Panc1 (cell line): ENCODE measurements at regions of chr17 and their contacts with region 1.

Region 1: DNA sequence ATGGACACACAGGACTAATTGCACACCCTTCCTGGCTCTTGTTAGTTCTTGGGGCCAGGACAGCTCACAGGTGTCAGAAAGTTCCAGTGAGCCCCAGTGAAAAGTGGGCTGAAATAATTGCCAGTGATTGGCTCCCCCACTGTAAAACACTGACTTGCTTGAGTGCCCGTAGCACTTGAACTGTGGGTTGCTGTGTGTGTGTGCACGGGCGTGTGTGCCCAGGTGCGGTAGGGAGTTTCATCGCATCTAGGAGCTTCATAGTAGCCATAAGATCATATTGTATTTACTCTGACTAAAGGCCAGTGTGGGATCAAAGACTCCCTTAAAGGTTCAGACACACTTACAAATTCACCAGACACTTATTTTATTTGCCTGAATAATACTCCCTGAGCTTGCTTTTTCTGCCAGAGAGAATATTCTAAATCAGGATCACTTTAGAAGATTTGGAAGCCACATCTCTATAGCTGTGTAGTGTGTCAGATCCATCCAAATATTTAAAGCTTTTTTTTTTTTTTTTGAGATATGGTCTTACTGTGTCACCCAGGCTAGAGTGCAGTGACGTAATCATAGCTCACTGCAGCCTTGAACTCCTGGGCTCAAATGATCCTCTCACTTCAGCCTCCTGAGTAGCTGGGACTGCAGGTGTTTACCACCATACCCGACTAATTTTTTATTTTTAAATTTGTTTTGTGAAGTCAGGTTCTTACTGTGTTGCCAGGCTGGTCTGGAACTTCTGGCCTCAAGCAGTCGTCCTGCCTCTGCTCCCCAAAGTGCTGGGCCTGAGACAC is 11.4 kb downstream of the UNK start:
- DNase-seq: no peak
- ATAC-seq: no peak
- H3K4me3 ChIP-seq: no peak overlapping the region
- H3K27ac ChIP-seq: no peak overlapping the region
- H3K4me1 ChIP-seq: no peaks in the 10 kb centered on the region
- H3K27me3 ChIP-seq: no peaks in the 10 kb centered on the region
- CTCF ChIP-seq: no peak

Region 2: GRCh38 chr17:73914536-73915274 is 1881.3 kb before region 1 on chr17:
- CTCF ChIA-PET with region 1: no interaction called
- POLR2A ChIA-PET with region 1: no interaction called
- in situ Hi-C with region 1: no loop called
- intact Hi-C with region 1: no loop called
- DNase-seq: no peak
- ATAC-seq: no peak
- H3K4me3 ChIP-seq: no peak overlapping the region
- H3K27ac ChIP-seq: no peak overlapping the region
- H3K4me1 ChIP-seq: no peaks in the 10 kb centered on the region
- H3K27me3 ChIP-seq: peaks cover 13% of the 10 kb centered on the region; the same call in 1 of the 2 replicates
- CTCF ChIP-seq: no peak

Region 3: DNA sequence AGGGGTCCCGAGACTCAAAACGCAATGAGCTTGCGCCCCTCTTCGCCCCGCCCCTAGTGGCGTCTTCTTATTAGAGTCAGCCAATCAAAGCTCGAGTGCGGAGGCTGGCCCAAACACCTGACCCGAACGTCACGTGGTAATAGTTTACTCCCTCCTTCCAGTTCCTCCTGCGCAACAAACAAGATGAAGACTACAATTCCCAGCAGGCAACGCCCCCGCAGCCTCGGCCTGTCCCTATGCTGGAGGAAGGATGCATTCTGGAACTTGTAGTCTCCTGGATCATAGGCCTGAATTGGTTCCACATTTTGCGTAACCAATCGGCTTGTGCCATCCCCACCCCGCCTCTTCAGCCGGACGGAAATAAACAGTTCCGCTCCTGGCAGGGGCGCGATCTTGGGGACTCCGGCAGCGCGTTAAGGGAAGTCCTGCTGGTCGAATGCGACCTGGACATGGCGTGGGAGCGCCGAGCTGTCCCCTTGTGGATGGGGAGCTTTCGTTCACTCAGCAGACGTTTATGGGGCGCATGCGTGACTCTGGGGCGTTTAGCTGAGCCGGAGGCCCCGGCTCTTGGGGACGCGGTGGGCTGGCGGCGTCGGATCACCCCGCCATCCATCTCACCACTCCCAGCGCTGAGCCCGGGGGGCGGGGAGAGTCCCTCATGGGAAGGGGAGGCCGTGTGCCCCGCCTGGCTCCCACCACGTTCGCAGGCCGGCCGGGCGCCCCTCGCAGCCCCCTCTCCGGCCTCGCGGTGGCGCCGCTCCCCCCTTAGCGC is 59.5 kb after region 1 on chr17 and contains the start of gene WBP2:
- CTCF ChIA-PET with region 1: no interaction called
- POLR2A ChIA-PET with region 1: interaction called, 15 read pairs
- in situ Hi-C with region 1: no loop called
- intact Hi-C with region 1: no loop called
- DNase-seq: peak; percentile 99
- ATAC-seq: peak; percentile 96
- H3K4me3 ChIP-seq: peak within 1 kb of the TSS; percentile 91 to 97
- H3K27ac ChIP-seq: peak within 1 kb of the TSS; percentile 88
- H3K4me1 ChIP-seq: peaks cover 19% of the 10 kb centered on the region
- H3K27me3 ChIP-seq: no peaks in the 10 kb centered on the region
- CTCF ChIP-seq: peak; percentile 81
- total RNA-seq, gene WBP2: 163 TPM